ENCODE measurements at regions of chr6 and their contacts with region 1.

Region 1: DNA sequence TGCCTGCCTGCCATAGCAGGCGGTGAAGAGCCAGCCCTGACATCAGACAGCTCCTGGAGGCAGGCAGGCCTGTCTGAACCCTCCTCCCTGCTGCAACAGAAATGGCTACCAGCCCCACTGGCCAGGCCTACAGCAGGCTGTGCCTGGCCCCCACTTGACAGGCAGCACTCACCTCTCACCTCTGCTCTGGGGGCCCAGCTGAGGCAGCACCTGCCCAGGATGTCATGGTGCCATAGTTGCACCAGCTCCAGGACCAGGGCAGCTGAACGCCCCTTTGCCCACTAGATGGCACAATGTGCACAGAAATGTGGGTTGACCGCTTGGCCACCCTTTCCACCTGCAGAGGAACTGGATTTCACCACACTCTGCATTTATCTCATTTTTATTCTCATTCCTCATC is 30.6 kb downstream of the MRPL14 start:
- DNase-seq: peak; percentile 84
- ATAC-seq: peak; percentile 91
- H3K4me3 Mint-ChIP-seq: no peak overlapping the region
- H3K27ac Mint-ChIP-seq: no peak overlapping the region
- H3K4me1 Mint-ChIP-seq: peaks cover 6% of the 10 kb centered on the region
- H3K27me3 Mint-ChIP-seq: no peaks in the 10 kb centered on the region

Region 2: DNA sequence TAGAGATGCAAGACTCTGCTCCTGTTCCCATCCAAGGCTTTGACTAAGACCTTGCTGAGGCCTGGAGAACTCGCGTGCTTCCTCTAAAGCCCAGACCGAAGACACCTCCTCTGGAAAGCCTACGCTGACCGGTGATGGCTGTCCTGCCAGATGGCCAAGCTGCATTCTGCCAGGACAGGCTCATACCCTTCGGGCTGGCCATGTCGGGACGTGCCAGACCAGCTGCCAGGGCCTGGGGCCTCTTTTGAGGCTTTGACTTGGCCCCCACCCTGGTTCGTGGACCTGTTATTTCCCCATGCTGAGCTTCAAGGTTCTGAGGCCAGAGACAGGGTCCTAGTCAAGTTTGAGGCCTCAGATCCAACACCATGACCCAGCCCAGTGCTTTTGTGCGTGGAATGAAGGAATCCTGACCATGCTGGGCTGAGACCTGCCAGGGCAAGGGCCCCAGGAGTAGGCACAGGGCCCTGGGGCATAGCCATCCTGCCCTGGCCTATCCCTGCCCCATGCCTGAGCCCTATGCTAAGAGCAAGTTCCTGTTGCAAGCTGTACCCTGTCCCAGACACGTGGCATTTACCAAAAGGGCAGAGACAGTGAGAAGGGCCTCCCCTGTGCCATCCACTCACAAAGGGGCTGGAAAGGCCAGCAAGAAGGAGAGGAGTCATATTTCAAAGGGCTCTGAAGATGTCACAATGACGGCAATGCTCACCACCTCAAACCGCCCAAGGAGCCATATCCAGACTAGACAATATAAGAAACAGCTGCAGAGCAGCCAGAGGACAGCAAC is 12.2 kb before region 1 on chr6:
- CTCF ChIA-PET with region 1: interaction called, 10 read pairs
- POLR2A ChIA-PET with region 1: no interaction called
- DNase-seq: no peak
- ATAC-seq: no peak
- H3K4me3 Mint-ChIP-seq: no peak overlapping the region
- H3K27ac Mint-ChIP-seq: no peak overlapping the region
- H3K4me1 Mint-ChIP-seq: peaks cover 4% of the 10 kb centered on the region
- H3K27me3 Mint-ChIP-seq: no peaks in the 10 kb centered on the region

Region 3: GRCh38 chr6:44111434-44112417 is 15.1 kb after region 1 on chr6:
- CTCF ChIA-PET with region 1: interaction called, 13 read pairs
- POLR2A ChIA-PET with region 1: no interaction called
- DNase-seq: no peak
- ATAC-seq: no peak
- H3K4me3 Mint-ChIP-seq: no peak overlapping the region
- H3K27ac Mint-ChIP-seq: peak overlapping the region; percentile 5
- H3K4me1 Mint-ChIP-seq: peaks cover 32% of the 10 kb centered on the region
- H3K27me3 Mint-ChIP-seq: no peaks in the 10 kb centered on the region

Region 4: DNA sequence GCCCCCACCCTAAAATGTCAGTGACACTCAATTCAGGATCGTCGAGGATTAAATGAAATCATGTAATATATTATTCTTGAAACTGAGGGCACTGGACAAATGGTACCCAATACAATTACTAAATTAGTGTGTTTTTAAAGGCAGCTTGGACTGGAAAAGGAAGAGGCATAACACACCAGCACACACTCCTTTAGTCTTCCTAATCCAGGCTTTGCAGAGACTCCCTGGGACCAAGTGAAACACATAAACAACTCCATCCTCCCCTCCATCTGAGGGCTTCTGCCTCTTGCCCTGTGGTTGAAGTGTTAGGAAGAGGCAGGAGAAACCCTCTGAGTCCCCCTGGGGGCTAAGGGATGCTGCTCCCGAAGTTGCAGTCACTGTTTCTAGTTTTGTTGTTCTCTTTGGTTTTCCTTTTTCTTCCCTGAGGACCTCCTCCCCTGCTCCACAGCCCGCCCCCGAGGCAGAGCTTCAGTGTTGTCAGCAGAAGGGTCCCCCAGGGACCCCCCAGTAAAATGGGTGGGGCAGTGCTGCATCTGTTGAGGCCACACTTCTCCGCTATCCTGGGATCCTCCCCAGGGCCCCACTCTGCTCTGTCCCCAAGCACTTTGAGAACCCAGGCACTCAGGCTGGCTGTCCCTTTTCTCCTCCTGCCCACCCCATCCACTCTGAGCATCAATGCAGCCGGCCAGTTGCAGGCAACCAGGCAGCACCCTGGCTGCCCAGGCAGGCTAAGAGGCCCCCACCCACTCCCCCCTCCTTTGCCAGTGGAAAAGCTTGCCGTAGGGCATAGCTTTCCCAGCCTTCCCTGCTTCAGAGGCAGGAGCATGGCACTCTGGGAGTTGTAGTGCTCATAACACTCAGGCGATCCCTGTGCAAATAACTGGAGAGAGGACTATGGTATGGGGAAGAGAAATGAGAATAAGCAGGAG is 36.7 kb after region 1 on chr6:
- CTCF ChIA-PET with region 1: interaction called, 10 read pairs
- POLR2A ChIA-PET with region 1: no interaction called
- DNase-seq: no peak
- ATAC-seq: no peak
- H3K4me3 Mint-ChIP-seq: no peak overlapping the region
- H3K27ac Mint-ChIP-seq: no peak overlapping the region
- H3K4me1 Mint-ChIP-seq: peaks cover 14% of the 10 kb centered on the region
- H3K27me3 Mint-ChIP-seq: peaks cover 2% of the 10 kb centered on the region

Region 5: GRCh38 chr6:44151348-44152108 is 54.9 kb after region 1 on chr6:
- CTCF ChIA-PET with region 1: interaction called, 36 read pairs
- POLR2A ChIA-PET with region 1: no interaction called
- DNase-seq: peak; percentile 85
- ATAC-seq: peak; percentile 96
- H3K4me3 Mint-ChIP-seq: no peak overlapping the region
- H3K27ac Mint-ChIP-seq: no peak overlapping the region
- H3K4me1 Mint-ChIP-seq: peaks cover 9% of the 10 kb centered on the region
- H3K27me3 Mint-ChIP-seq: no peaks in the 10 kb centered on the region

Region 6: GRCh38 chr6:44338228-44339122 is 241.9 kb after region 1 on chr6:
- CTCF ChIA-PET with region 1: interaction called, 13 read pairs
- POLR2A ChIA-PET with region 1: no interaction called
- DNase-seq: peak; percentile 80
- ATAC-seq: peak; percentile 91
- H3K4me3 Mint-ChIP-seq: no peak overlapping the region
- H3K27ac Mint-ChIP-seq: no peak overlapping the region
- H3K4me1 Mint-ChIP-seq: peaks cover 2% of the 10 kb centered on the region
- H3K27me3 Mint-ChIP-seq: peaks cover 26% of the 10 kb centered on the region